ENCODE measurements at regions of chr4 and their contacts with region 1.

Region 1: GRCh38 chr4:139295206-139295941 is 5.9 kb upstream of the NAA15 start:
- DNase-seq: peak; percentile 81 to 98 (median 86)
- ATAC-seq: peak; percentile 89
- H3K4me3 ChIP-seq: peak overlapping the region; percentile 82
- H3K27ac ChIP-seq: peak overlapping the region; percentile 90
- H3K4me1 ChIP-seq: peaks cover 7 to 12% of the 10 kb centered on the region in 2 experiments; a peak in 4 of 5 replicates
- H3K27me3 ChIP-seq: no peaks in the 10 kb centered on the region
- CTCF ChIP-seq: peak; percentile 96 to 99 (median 99)
- EP300 ChIP-seq: peak; percentile 51; the same call in 1 of the 2 replicates
- POLR2A ChIP-seq: peak; percentile 93
- RAD21 ChIP-seq: peak; percentile 77 to 84

Region 2: DNA sequence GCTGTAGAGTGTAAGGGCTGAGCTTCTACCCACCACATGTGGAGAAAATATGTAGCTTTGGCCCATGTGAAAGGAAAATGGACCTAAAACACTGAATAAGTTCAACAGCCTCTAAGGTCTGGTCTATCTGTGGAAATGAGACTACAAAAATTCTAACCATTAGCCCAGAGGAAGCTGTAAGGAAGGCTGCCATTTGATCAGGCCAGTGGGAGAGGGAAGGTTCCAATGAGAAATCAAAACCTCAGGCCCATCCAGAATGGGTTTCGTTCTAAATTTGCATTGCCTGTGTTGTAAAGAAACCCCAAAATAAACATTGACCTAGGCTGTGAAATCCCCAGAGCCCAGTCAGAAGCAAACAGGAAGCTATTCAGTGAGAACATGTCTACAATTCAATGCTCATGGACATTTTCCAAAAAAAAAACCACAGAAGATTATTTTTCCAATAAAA is 732.8 kb before region 1 on chr4:
- CTCF ChIA-PET with region 1: no interaction called
- POLR2A ChIA-PET with region 1: no interaction called
- in situ Hi-C with region 1: no loop called
- intact Hi-C with region 1: no loop called
- DNase-seq: no peak
- ATAC-seq: no peak
- H3K4me3 ChIP-seq: no peak overlapping the region
- H3K27ac ChIP-seq: no peak overlapping the region
- H3K4me1 ChIP-seq: peaks cover 0 to 3% of the 10 kb centered on the region in 2 experiments; a peak in 3 of 5 replicates
- H3K27me3 ChIP-seq: no peaks in the 10 kb centered on the region
- CTCF ChIP-seq: no peak
- EP300 ChIP-seq: no peak
- POLR2A ChIP-seq: no peak
- RAD21 ChIP-seq: no peak

Region 3: GRCh38 chr4:139015269-139015947 is 280.0 kb before region 1 on chr4 and contains the start of gene NOCT:
- CTCF ChIA-PET with region 1: no interaction called
- POLR2A ChIA-PET with region 1: no interaction called
- in situ Hi-C with region 1: no loop called
- intact Hi-C with region 1: loop called (anchors 5 kb)
- DNase-seq: peak; percentile 86 to 92 (median 88)
- ATAC-seq: peak; percentile 94
- H3K4me3 ChIP-seq: peak within 1 kb of the TSS; percentile 92
- H3K27ac ChIP-seq: peak within 1 kb of the TSS; percentile 92
- H3K4me1 ChIP-seq: peaks cover 24 to 32% of the 10 kb centered on the region in 2 experiments; a peak in 4 of 5 replicates
- H3K27me3 ChIP-seq: no peaks in the 10 kb centered on the region
- CTCF ChIP-seq: peak in 1 of 3 experiments; percentile 4; a peak in 1 of 6 replicates
- EP300 ChIP-seq: no peak; the same call in 1 of the 2 replicates
- POLR2A ChIP-seq: peak; percentile 91
- RAD21 ChIP-seq: no peak
- polyA plus RNA-seq, gene NOCT: 1.3 to 2.8 TPM

Region 4: DNA sequence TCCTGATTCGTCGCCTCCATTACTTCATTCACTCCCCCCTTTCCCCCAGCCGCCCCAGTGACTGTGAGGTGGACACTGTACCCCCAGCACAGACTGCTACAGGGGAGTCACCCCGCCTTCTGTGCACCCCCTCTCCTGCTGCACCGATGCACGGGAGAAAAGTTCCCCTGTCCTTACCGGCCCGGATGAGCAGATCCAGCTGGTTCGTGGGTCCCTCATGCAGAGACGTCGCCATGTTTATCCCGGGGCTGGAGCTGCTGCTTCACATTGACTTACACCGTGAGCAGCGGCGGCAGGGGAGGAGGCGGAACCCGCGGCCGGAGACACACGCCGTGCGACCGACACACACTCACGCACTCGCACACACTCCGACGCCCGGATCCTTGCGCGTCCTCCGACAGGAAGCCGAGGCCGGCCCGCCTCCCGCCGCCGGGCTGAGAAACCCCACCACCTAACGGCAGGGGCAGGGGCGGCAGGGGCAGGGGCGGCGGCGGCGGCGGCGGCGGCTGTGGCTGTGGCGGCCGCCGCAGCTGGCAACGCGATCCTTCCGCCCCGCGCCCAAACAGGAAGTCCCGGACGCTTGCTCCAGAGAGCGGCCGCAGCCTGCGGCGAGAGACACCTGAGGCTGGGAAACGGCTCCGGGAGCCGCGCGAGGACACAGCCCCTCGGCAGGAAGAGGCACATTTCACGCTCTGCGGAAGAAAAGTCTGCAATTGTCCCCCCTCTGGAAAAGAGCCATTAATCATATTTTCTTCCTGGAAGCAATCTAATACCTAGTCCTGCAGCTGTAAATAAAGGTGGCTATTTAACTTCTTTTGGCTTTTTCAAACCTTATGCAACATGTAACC is 211.2 kb before region 1 on chr4:
- CTCF ChIA-PET with region 1: no interaction called
- POLR2A ChIA-PET with region 1: interaction called, 4 read pairs
- in situ Hi-C with region 1: no loop called
- intact Hi-C with region 1: loop called (anchors 5 kb)
- DNase-seq: peak; percentile 70 to 92 (median 75)
- ATAC-seq: peak; percentile 72
- H3K4me3 ChIP-seq: peak overlapping the region; percentile 85
- H3K27ac ChIP-seq: peak overlapping the region; percentile 98
- H3K4me1 ChIP-seq: peaks cover 6 to 8% of the 10 kb centered on the region in 2 experiments; a peak in 4 of 5 replicates
- H3K27me3 ChIP-seq: no peaks in the 10 kb centered on the region
- CTCF ChIP-seq: peak in 2 of 3 experiments; percentile 16 to 46; a peak in 2 of 6 replicates
- EP300 ChIP-seq: no peak
- POLR2A ChIP-seq: peak; percentile 85
- RAD21 ChIP-seq: no peak

Region 5: DNA sequence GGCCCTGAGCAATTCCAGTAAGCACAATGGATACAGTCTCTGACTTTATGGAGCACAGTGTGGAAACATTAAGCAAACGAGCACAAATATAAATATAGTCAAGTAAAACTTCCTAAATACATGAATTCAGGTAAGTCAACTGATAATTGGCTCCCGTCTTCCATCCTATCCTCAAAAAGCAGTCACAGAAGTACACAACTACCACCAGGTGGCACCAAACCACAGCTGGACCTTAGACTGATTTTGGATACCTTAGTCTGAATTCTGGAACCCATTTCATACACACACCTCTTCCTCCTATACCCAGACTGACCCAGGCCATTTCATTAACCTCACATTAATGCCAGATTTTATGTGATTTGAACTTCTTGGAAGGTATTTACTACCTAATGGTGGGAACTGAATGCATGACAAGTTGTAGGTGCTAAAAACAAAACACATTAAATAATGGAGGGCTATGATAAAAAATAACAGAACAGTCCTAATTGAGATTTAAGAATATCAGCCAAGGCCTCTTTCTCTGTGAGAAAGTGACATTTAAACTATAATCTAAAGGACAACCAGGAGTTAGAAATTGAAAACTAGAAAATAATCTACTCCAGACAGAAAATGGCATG is 195.9 kb before region 1 on chr4:
- CTCF ChIA-PET with region 1: interaction called, 9 read pairs
- POLR2A ChIA-PET with region 1: no interaction called
- in situ Hi-C with region 1: no loop called
- intact Hi-C with region 1: loop called (anchors 1 kb)
- DNase-seq: peak; percentile 70 to 90 (median 71)
- ATAC-seq: peak; percentile 95
- H3K4me3 ChIP-seq: no peak overlapping the region
- H3K27ac ChIP-seq: no peak overlapping the region
- H3K4me1 ChIP-seq: no peaks in the 10 kb centered on the region; a peak in 1 of 5 replicates
- H3K27me3 ChIP-seq: no peaks in the 10 kb centered on the region
- CTCF ChIP-seq: peak; percentile 81 to 92 (median 84)
- EP300 ChIP-seq: no peak
- POLR2A ChIP-seq: no peak
- RAD21 ChIP-seq: peak; percentile 82 to 91

Region 6: DNA sequence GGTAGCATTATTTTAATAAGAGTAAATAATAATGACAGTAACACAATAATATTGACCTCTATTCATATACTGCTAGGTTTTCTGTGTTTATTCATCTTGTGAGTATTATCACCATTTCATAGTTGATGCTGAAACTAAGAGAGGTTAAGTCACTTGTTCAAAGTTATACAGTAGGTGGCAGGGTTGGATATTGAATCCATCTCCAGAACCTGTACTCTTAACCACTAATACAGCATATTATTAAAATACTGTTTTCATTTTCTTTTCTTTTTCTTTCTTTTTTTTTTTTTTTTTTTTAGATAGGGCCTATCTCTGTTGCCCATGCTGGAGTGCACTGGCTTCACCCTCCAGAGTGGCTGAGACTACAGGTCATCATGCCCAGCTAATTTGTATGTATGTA is 111.2 kb before region 1 on chr4:
- CTCF ChIA-PET with region 1: interaction called, 11 read pairs
- POLR2A ChIA-PET with region 1: interaction called, 3 read pairs
- in situ Hi-C with region 1: no loop called
- intact Hi-C with region 1: loop called (anchors 1 kb)
- DNase-seq: no peak
- ATAC-seq: peak; percentile 46
- H3K4me3 ChIP-seq: no peak overlapping the region
- H3K27ac ChIP-seq: no peak overlapping the region
- H3K4me1 ChIP-seq: peaks cover 5 to 14% of the 10 kb centered on the region in 2 experiments; a peak in 3 of 5 replicates
- H3K27me3 ChIP-seq: no peaks in the 10 kb centered on the region
- CTCF ChIP-seq: peak in 2 of 3 experiments; percentile 36 to 66; a peak in 3 of 6 replicates
- EP300 ChIP-seq: no peak
- POLR2A ChIP-seq: no peak
- RAD21 ChIP-seq: peak; percentile 59 to 78

Region 7: GRCh38 chr4:139441029-139441428 is 145.7 kb after region 1 on chr4:
- CTCF ChIA-PET with region 1: no interaction called
- POLR2A ChIA-PET with region 1: no interaction called
- in situ Hi-C with region 1: no loop called
- intact Hi-C with region 1: no loop called
- DNase-seq: no peak
- ATAC-seq: no peak
- H3K4me3 ChIP-seq: no peak overlapping the region
- H3K27ac ChIP-seq: no peak overlapping the region
- H3K4me1 ChIP-seq: peaks cover 4 to 7% of the 10 kb centered on the region in 2 experiments; a peak in 3 of 5 replicates
- H3K27me3 ChIP-seq: no peaks in the 10 kb centered on the region
- CTCF ChIP-seq: no peak
- EP300 ChIP-seq: no peak
- POLR2A ChIP-seq: no peak
- RAD21 ChIP-seq: no peak

Measured in K562 (cell line).